ENCODE measurements at regions of chr5 and their contacts with region 1.

Region 1: DNA sequence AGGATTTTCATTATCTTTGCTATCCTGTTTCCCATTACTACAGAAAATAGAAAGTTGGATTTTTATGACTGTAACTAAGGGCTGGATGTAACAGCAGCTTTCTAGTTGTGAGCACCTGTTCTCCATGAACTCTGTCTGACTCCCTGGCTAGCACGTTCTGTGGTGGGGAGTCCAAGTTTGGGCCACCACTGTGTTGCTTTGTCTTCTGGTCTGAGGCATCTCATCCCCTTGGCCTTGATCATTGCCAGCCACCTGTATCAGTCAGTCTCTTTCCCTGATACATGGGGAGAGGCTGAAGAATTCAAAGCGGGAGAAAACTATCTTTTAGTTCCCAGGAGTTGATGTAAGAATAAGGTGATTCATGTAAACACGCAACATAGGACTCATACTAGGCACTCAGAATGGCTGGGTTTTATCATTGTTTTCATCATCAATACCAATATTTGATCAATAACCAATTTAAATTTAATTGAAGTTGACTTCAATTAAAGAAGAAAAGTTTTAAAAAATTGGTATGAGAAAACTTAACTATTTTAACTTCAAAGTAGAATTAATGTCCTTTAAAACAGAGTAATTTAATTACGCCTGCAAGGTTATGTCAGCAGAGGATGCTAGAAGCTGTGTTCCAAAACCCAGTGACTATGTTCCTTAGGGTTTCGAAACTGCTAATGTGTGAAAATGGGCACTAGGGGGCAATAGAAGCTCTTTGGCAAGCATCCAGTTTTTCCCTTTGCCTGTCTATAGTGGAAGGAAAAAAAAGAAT is 33.6 kb downstream of the WDR70 start:
- DNase-seq: peak; percentile 66
- H3K4me3 Mint-ChIP-seq: no peak overlapping the region
- H3K27ac Mint-ChIP-seq: no peak overlapping the region
- H3K4me1 Mint-ChIP-seq: no peaks in the 10 kb centered on the region
- H3K27me3 Mint-ChIP-seq: no peaks in the 10 kb centered on the region
- CTCF ChIP-seq: peak; percentile 66

Region 2: GRCh38 chr5:37375091-37375490 is 37.6 kb before region 1 on chr5:
- CTCF ChIA-PET with region 1: interaction called, 13 read pairs
- intact Hi-C with region 1: no loop called
- DNase-seq: no peak
- H3K4me3 Mint-ChIP-seq: no peak overlapping the region
- H3K27ac Mint-ChIP-seq: no peak overlapping the region
- H3K4me1 Mint-ChIP-seq: peaks cover under 1% of the 10 kb centered on the region
- H3K27me3 Mint-ChIP-seq: no peaks in the 10 kb centered on the region
- CTCF ChIP-seq: no peak

Region 3: GRCh38 chr5:37626266-37626665 is 213.6 kb after region 1 on chr5:
- CTCF ChIA-PET with region 1: no interaction called
- intact Hi-C with region 1: loop called (anchors 10 kb)
- DNase-seq: no peak
- H3K4me3 Mint-ChIP-seq: no peak overlapping the region
- H3K27ac Mint-ChIP-seq: no peak overlapping the region
- H3K4me1 Mint-ChIP-seq: no peaks in the 10 kb centered on the region
- H3K27me3 Mint-ChIP-seq: no peaks in the 10 kb centered on the region
- CTCF ChIP-seq: no peak

Region 4: DNA sequence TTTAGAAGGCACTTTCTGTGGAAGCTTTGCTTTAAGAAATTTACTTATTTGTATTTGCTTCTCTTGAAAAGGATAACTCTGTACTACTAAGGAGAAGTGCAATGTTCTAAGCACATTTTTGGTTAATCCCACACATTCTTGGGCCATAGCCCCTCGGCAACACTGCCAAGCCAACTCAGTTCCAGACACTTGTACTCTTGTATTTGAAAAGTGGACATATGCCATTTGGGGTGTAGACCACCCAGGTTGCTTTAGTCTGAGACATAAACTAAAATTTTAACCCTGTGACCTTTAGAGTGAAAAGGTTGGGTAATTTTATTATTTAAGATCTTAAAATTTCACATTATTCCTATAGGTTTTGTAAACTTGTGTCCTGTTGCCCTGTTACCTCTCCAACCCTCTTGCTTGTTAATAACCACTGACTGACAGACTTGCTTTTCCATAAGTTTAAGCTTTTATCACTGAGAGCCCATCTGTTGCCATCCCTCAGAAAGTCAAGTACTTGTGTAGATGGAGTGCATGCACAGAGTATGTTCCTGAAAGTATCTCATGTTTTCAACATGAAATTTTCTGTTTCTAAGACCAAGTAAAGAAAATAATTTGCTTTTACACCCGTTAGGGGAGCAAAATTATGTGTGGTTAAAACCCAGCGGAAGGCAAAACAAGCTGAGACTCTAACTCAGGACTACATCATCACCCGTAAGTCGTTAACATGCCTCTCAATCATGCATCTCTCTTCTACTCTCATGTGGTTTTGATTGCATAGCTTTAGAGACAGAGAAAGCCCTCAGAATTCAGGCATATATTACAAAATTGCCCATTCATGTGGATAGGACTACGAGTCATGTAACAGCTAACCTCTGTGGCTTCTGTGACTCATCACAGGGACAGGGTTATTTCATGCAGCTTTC is 309.8 kb after region 1 on chr5:
- CTCF ChIA-PET with region 1: no interaction called
- intact Hi-C with region 1: loop called (anchors 10 kb)
- DNase-seq: no peak
- H3K4me3 Mint-ChIP-seq: no peak overlapping the region
- H3K27ac Mint-ChIP-seq: no peak overlapping the region
- H3K4me1 Mint-ChIP-seq: peaks cover 14% of the 10 kb centered on the region
- H3K27me3 Mint-ChIP-seq: no peaks in the 10 kb centered on the region
- CTCF ChIP-seq: no peak

Region 5: GRCh38 chr5:38193015-38193581 is 780.4 kb after region 1 on chr5:
- CTCF ChIA-PET with region 1: interaction called, 7 read pairs
- intact Hi-C with region 1: loop called (anchors 1 kb)
- DNase-seq: peak; percentile 69
- H3K4me3 Mint-ChIP-seq: no peak overlapping the region
- H3K27ac Mint-ChIP-seq: no peak overlapping the region
- H3K4me1 Mint-ChIP-seq: no peaks in the 10 kb centered on the region
- H3K27me3 Mint-ChIP-seq: peaks cover 45% of the 10 kb centered on the region
- CTCF ChIP-seq: peak; percentile 84